ENCODE measurements at regions of chr2 and their contacts with region 1.

Region 1: GRCh38 chr2:99489761-99490622 is at the start of gene REV1:
- DNase-seq: peak; percentile 77 to 96
- H3K4me3 ChIP-seq: peak within 1 kb of the TSS; percentile 77
- H3K27ac ChIP-seq: peak within 1 kb of the TSS; percentile 66
- H3K4me1 ChIP-seq: peaks cover 19% of the 10 kb centered on the region
- H3K27me3 ChIP-seq: no peaks in the 10 kb centered on the region
- CTCF ChIP-seq: peak; percentile 89
- total RNA-seq, gene REV1: 47.8 and 50.5 TPM in 2 replicates

Region 2: GRCh38 chr2:99066075-99066958 is 423.7 kb before region 1 on chr2:
- CTCF ChIA-PET with region 1: no interaction called
- POLR2A ChIA-PET with region 1: no interaction called
- intact Hi-C with region 1: loop called (anchors 1 kb)
- DNase-seq: peak; percentile 34 to 69
- H3K4me3 ChIP-seq: no peak overlapping the region
- H3K27ac ChIP-seq: no peak overlapping the region
- H3K4me1 ChIP-seq: peaks cover 4% of the 10 kb centered on the region; the same call in 1 of the 2 replicates
- H3K27me3 ChIP-seq: no peaks in the 10 kb centered on the region
- CTCF ChIP-seq: peak; percentile 81

Region 3: DNA sequence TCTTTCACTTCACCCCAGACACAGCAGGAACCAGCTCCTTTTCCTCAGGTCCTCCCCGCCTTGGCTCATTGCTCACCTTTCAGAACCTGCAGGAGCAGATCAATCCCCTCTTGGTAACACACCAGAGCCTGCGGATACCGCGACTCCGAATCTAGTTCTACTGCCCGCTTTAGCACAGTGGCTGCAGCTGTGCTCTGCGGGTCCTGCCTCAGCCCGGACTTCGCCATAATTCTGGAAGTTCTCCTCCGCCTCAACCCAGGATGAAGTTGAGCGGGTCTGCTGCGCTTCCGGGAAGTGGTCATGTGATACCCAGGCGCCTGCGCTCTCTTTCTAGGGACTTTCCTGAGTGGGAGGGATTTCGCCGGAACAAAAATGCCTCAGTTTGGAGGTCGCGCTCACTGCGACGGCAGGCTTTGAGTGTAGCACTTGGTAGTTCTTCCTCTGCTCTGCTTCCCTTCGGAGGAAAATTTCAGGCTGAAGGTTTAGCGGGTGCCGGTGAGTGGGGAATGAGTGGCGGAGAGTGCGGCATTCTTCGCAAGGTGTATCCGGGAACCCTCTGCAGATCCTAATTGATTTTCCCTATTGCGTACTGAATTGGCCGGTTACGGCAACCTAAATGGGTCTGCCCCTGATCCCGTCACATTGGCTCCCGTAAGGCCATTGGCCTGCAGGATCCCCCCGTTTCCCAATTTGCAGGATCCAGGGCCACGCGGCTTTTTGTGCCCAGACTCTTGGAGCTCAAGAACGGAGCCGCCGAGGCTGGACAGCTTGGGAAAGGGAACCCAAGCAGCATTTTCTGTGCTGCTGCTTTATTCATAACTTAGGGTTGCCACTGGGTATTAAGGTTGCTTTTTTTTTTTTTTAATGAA is 309.0 kb before region 1 on chr2 and contains the starts of genes MITD1 and MRPL30:
- CTCF ChIA-PET with region 1: no interaction called
- POLR2A ChIA-PET with region 1: no interaction called
- intact Hi-C with region 1: loop called (anchors 1 kb)
- DNase-seq: peak; percentile 92 to 93
- H3K4me3 ChIP-seq: peak within 1 kb of the TSS; percentile 84
- H3K27ac ChIP-seq: peak within 1 kb of the TSS; percentile 56
- H3K4me1 ChIP-seq: peaks cover 37% of the 10 kb centered on the region
- H3K27me3 ChIP-seq: no peaks in the 10 kb centered on the region
- CTCF ChIP-seq: no peak
- total RNA-seq, gene MITD1: 35.0 and 37.6 TPM in 2 replicates
- total RNA-seq, gene MRPL30: 50.1 and 52.6 TPM in 2 replicates

Region 4: DNA sequence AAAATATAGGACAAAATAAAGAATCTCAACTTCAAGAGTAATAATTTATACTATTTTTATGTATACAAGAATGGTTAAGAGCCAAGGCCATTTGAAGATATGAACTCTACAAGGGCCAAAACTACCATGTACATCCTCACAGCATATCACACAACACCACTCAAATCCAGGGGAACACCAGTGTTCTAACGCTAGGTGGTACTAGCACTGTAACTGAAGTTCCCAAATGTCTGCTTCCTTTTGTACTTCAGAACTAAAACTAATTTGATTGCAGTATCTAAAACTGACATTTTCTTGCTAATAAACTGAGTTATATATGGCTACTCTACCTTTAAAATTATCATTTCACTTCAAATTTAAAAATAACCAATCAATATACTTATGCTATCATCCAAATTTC is 47.2 kb before region 1 on chr2:
- CTCF ChIA-PET with region 1: no interaction called
- POLR2A ChIA-PET with region 1: no interaction called
- intact Hi-C with region 1: loop called (anchors 5 kb)
- DNase-seq: no peak
- H3K4me3 ChIP-seq: no peak overlapping the region
- H3K27ac ChIP-seq: no peak overlapping the region
- H3K4me1 ChIP-seq: no peaks in the 10 kb centered on the region
- H3K27me3 ChIP-seq: no peaks in the 10 kb centered on the region
- CTCF ChIP-seq: no peak